ENCODE measurements at regions of chr14 and their contacts with region 1.

Region 1: DNA sequence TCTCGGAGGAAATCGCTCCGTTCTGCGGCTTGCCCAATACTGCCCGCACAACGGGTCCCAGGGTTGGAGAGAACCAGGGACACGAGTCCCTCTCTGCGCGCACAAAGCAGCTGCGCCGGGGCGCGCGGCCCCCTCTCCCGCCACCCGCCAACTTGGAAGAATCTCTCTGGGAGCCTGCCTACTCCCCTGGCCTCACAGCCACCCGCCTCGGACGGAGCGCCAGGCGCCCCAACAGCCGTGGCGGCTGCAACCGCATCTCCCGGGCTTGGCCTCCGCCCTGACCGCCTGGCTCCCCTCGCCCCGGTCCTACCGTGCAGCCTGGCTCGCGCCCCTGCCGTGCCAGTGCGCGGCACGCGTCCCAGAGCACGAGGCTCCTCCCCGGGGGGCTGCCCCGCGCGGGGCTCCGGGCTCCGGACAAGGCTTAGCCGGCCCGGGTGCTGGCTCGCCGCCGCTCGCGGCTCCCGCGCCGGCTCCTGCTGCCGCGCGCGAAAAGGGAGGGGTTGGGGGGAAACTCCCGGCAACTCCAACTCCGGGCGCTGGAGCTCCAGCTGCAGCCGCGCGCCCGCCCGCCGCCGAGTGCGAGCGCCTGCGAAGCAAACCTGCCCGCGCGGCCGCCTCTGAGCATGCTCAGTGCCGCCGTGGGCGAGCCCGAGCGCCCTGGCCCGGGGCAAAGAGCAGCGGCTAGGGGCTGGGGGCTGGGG is at the start of gene STXBP6:
- DNase-seq: peak; percentile 78
- H3K4me3 ChIP-seq: peak within 1 kb of the TSS; percentile 71 to 85 (median 74)
- H3K27ac ChIP-seq: peak within 1 kb of the TSS; percentile 86 to 94 (median 90)
- H3K4me1 ChIP-seq: peaks cover 4 to 43% (median 25%) of the 10 kb centered on the region in 4 donors
- H3K27me3 ChIP-seq: peaks cover 12% of the 10 kb centered on the region
- CTCF ChIP-seq: no peak
- EP300 ChIP-seq: no peak
- POLR2A ChIP-seq: peak; percentile 46
- total RNA-seq, gene STXBP6: 7.1 to 16.8 (median 8.9) TPM

Region 2: GRCh38 chr14:24817212-24818057 is 232.3 kb before region 1 on chr14:
- in situ Hi-C with region 1: loop called in 3 of 4 experiments (anchors 10 kb)
- intact Hi-C with region 1: no loop called
- DNase-seq: peak; percentile 73
- H3K4me3 ChIP-seq: no peak overlapping the region
- H3K27ac ChIP-seq: peak overlapping the region; percentile 78 to 87 (median 80)
- H3K4me1 ChIP-seq: peaks cover 0 to 49% (median 31%) of the 10 kb centered on the region in 4 donors
- H3K27me3 ChIP-seq: no peaks in the 10 kb centered on the region
- CTCF ChIP-seq: peak in 1 of 5 experiments; percentile 24
- EP300 ChIP-seq: no peak
- POLR2A ChIP-seq: no peak

Region 3: GRCh38 chr14:25267186-25267585 is 217.5 kb after region 1 on chr14:
- in situ Hi-C with region 1: no loop called
- intact Hi-C with region 1: no loop called
- DNase-seq: no peak
- H3K4me3 ChIP-seq: no peak overlapping the region
- H3K27ac ChIP-seq: no peak overlapping the region
- H3K4me1 ChIP-seq: no peaks in the 10 kb centered on the region
- H3K27me3 ChIP-seq: no peaks in the 10 kb centered on the region
- CTCF ChIP-seq: no peak
- EP300 ChIP-seq: no peak
- POLR2A ChIP-seq: no peak

Measured in transverse colon (tissue), 4 donors.